Activated CD4-positive, alpha-beta memory T cell treated with anti-CD3 and anti-CD28 coated beads for 36 hours (primary cell): ENCODE measurements at regions of chr4 and their contacts with region 1.

Region 1: GRCh38 chr4:44678094-44679041 is at the start of gene GUF1:
- DNase-seq: peak; percentile 92
- H3K4me3 Mint-ChIP-seq: peak within 1 kb of the TSS; percentile 96
- H3K27ac Mint-ChIP-seq: peak within 1 kb of the TSS; percentile 94
- H3K4me1 Mint-ChIP-seq: peaks cover 28% of the 10 kb centered on the region
- H3K27me3 Mint-ChIP-seq: no peaks in the 10 kb centered on the region
- total RNA-seq, gene GUF1: 25.8 to 28.0 TPM

Region 2: GRCh38 chr4:44629280-44629866 is 49.0 kb before region 1 on chr4:
- CTCF ChIA-PET with region 1: no interaction called
- POLR2A ChIA-PET with region 1: no interaction called
- intact Hi-C with region 1: loop called (anchors 2 kb)
- DNase-seq: peak; percentile 42
- H3K4me3 Mint-ChIP-seq: no peak overlapping the region
- H3K27ac Mint-ChIP-seq: no peak overlapping the region
- H3K4me1 Mint-ChIP-seq: peaks cover 1% of the 10 kb centered on the region
- H3K27me3 Mint-ChIP-seq: no peaks in the 10 kb centered on the region

Region 3: DNA sequence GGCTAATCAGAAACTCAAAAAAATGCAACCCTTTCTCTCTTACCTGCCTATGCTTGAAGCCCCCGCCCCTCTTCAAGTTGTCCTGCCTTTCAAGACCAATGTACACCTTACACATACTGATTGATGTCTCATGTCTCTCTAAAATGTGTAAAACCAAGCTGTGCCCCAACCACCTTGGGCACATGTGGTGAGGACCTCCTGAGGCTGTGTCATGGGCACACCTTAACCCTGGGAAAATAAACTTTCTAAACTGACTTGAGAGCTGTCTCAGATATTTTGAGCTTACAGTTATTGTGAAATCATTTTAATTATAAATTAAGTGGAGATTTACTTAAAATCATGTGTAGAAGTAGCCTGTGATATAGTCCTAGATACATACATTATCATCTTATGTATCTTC is 22.1 kb after region 1 on chr4:
- CTCF ChIA-PET with region 1: no interaction called
- POLR2A ChIA-PET with region 1: interaction called, 4 read pairs
- intact Hi-C with region 1: loop called (anchors 2 kb)
- DNase-seq: no peak
- H3K4me3 Mint-ChIP-seq: no peak overlapping the region
- H3K27ac Mint-ChIP-seq: no peak overlapping the region
- H3K4me1 Mint-ChIP-seq: peaks cover 2% of the 10 kb centered on the region
- H3K27me3 Mint-ChIP-seq: no peaks in the 10 kb centered on the region

Region 4: GRCh38 chr4:44726262-44726871 is 48.0 kb after region 1 on chr4 and contains the start of gene GNPDA2:
- CTCF ChIA-PET with region 1: no interaction called
- POLR2A ChIA-PET with region 1: interaction called, 30 read pairs
- intact Hi-C with region 1: loop called (anchors 1 kb)
- DNase-seq: peak; percentile 89
- H3K4me3 Mint-ChIP-seq: peak within 1 kb of the TSS; percentile 92
- H3K27ac Mint-ChIP-seq: peak within 1 kb of the TSS; percentile 85
- H3K4me1 Mint-ChIP-seq: peaks cover 33% of the 10 kb centered on the region
- H3K27me3 Mint-ChIP-seq: peaks cover under 1% of the 10 kb centered on the region
- total RNA-seq, gene GNPDA2: 15.1 to 15.8 TPM

Region 5: DNA sequence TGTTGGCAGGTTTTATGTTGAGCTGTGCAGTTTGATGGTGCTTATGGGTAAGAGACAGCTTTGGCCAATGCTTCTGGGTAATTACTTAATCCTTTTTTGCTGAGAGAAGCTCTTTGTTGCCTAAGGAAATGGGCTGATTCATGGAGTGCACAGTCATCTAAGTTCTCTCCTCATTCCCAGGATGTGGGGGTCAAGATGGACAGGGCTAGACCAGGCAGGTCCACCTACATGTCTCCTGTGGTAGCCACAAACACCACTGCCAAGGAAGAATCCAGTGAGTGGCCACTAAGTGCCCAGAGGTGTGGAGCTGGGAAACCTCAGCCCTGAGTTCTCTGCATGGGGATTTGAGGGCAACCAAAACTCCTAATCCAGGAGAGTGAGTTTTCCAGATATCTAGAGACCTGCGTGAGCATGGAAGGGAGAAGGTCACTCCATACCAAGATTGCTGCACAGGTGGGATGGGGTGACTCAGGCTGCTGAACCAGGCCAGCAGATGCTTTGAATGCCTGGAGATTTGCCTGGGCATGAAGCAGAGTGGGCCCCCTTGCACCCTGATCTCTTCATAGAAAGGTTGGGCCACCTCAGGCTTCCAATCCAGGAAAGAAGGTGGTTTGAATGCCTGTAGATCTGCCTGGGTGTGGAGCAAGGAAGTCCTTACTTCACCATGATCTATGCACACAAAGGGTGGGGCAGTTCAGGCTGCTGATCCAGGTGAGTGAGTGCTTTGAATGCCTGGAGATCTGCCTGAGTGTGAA is 282.8 kb after region 1 on chr4:
- CTCF ChIA-PET with region 1: no interaction called
- POLR2A ChIA-PET with region 1: no interaction called
- intact Hi-C with region 1: no loop called
- DNase-seq: no peak
- H3K4me3 Mint-ChIP-seq: no peak overlapping the region
- H3K27ac Mint-ChIP-seq: no peak overlapping the region
- H3K4me1 Mint-ChIP-seq: no peaks in the 10 kb centered on the region
- H3K27me3 Mint-ChIP-seq: no peaks in the 10 kb centered on the region